HEK293 (cell line): ENCODE measurements at regions of chr5 and their contacts with region 1.

Region 1: GRCh38 chr5:142769741-142770631 is at the start of gene ARHGAP26:
- H3K4me3 ChIP-seq: peak within 1 kb of the TSS; percentile 93
- H3K27ac ChIP-seq: peak within 1 kb of the TSS; percentile 86
- H3K4me1 ChIP-seq: 0 out of 2 replicates have a peak, but pooled peaks cover 4% of the 10 kb centered on the region
- CTCF ChIP-seq: peak; percentile 71

Region 2: GRCh38 chr5:142685418-142686209 is 84.4 kb before region 1 on chr5 and contains the start of gene FGF1:
- CTCF ChIA-PET with region 1: no interaction called
- POLR2A ChIA-PET with region 1: no interaction called
- H3K4me3 ChIP-seq: no peak within 1 kb of the TSS
- H3K27ac ChIP-seq: no peak within 1 kb of the TSS
- H3K4me1 ChIP-seq: no peaks in the 10 kb centered on the region; the same call in 1 of the 2 replicates
- CTCF ChIP-seq: no peak

Region 3: GRCh38 chr5:142783601-142784341 is 13.8 kb after region 1 on chr5:
- CTCF ChIA-PET with region 1: interaction called, 16 read pairs
- POLR2A ChIA-PET with region 1: interaction called, 10 read pairs
- H3K4me3 ChIP-seq: no peak overlapping the region
- H3K27ac ChIP-seq: no peak overlapping the region
- H3K4me1 ChIP-seq: peaks cover 26% of the 10 kb centered on the region
- CTCF ChIP-seq: no peak

Region 4: DNA sequence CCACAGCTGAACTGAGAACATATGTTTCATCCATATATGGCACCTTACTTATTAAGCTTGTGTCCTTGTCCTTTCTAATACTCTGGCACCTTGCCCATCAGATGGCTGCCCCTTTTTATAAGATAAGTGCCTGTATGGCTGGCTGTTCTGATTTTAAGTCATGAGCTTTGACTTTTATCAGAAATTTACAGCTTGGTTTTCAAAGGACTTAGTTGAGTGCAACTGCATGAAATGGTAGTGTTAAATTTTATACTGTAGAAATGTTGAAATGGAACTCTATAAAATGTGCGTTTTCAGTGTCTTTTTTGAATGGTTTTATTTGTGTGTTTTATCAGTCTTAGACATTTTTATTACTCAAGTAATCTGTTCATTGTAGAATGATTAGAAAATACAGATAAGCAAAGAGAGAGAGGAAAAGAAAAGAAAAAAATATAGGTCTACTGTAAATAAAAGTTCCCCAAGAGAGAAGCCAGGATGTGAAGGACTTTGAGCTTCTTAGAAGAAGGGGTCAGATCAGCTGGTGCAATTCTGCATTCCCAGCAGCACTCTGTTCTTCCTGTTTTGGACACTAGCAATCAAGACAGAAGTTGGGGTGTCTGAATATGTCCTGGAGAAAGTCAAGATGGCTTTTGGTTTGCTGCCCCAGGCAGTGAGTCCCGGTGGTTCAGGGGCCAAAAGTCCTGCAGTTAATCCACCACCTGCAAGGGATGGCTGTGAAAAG is 39.1 kb after region 1 on chr5:
- CTCF ChIA-PET with region 1: interaction called, 5 read pairs
- POLR2A ChIA-PET with region 1: interaction called, 10 read pairs
- H3K4me3 ChIP-seq: no peak overlapping the region
- H3K27ac ChIP-seq: peak overlapping the region; percentile 12; the same call in 1 of the 2 replicates
- H3K4me1 ChIP-seq: peaks cover 39% of the 10 kb centered on the region
- CTCF ChIP-seq: no peak